Pancreas (tissue), 10 donors: ENCODE measurements at regions of chr20 and their contacts with region 1.

Region 1: DNA sequence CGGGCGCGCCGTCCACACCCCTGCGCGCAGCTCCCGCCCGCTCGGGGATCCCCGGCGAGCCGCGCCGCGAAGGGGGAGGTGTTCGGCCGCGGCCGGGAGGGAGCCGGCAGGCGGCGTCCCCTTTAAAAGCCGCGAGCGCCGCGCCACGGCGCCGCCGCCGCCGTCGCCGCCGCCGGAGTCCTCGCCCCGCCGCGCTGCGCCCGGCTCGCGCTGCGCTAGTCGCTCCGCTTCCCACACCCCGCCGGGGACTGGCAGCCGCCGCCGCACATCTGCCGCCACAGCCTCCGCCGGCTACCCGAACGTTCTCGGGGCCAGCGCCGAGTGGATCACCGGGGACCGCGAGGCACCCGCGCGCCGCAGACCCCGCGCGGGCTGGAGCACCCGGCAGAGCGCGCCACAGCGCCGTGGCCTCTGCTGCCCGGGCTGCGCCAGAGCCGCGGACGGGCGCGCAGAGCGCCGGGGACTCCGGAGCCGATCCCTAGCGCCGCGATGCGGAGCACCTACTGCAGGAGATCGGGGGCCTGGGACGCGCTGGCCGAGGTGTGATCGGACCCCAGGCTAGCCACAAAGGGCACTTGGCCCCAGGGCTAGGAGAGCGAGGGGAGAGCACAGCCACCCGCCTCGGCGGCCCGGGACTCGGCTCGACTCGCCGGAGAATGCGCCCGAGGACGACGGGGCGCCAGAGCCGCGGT is at the start of gene BMP2:
- DNase-seq: peak; percentile 43 to 86 (median 67)
- ATAC-seq: peak; percentile 68 to 77 (median 68)
- H3K4me3 ChIP-seq: peak within 1 kb of the TSS; percentile 64 to 81 (median 74)
- H3K27ac ChIP-seq: peak within 1 kb of the TSS; percentile 27 to 85 (median 67)
- H3K4me1 ChIP-seq: peaks cover 0 to 15% (median 0%) of the 10 kb centered on the region in 3 donors
- H3K27me3 ChIP-seq: no peaks in the 10 kb centered on the region
- CTCF ChIP-seq: no peak
- total RNA-seq, gene BMP2: 4.0 to 12.6 (median 6.5) TPM

Region 2: DNA sequence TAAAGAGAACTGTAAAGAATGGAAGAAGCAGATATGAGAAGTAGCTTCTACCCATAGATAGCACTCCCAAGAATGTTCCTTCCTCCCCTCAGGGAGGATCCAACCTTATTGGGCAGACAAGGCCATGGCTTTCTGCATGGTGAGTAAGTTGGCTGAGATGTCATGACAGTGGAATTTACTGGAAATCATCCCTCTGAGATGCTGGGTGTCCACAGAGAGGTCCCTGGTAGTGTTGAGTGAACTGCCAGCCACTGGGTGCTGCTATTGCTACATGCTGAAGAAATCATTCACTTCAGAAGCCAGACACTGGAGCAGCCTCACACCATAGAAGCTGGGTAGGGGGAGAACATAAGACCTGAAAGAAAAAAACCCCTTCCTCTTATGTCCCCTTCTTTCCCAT is 598.4 kb before region 1 on chr20:
- intact Hi-C with region 1: loop called in 1 of 3 experiments (anchors 10 kb)
- DNase-seq: no peak
- ATAC-seq: no peak
- H3K4me3 ChIP-seq: no peak overlapping the region
- H3K27ac ChIP-seq: no peak overlapping the region
- H3K4me1 ChIP-seq: no peaks in the 10 kb centered on the region
- H3K27me3 ChIP-seq: no peaks in the 10 kb centered on the region
- CTCF ChIP-seq: no peak

Region 3: GRCh38 chr20:6636209-6637159 is 131.2 kb before region 1 on chr20:
- intact Hi-C with region 1: loop called in 1 of 3 experiments (anchors 10 kb)
- DNase-seq: peak in 3 of 6 donors; percentile 43 to 53 (median 44)
- ATAC-seq: peak; percentile 97 to 98 (median 98)
- H3K4me3 ChIP-seq: no peak overlapping the region
- H3K27ac ChIP-seq: no peak overlapping the region
- H3K4me1 ChIP-seq: peaks cover 0 to 6% (median 0%) of the 10 kb centered on the region in 3 donors
- H3K27me3 ChIP-seq: no peaks in the 10 kb centered on the region
- CTCF ChIP-seq: peak; percentile 44 to 58 (median 46)